Naive thymus-derived CD8-positive, alpha-beta T cell (primary cell): ENCODE measurements at regions of chr15 and their contacts with region 1.

Region 1: DNA sequence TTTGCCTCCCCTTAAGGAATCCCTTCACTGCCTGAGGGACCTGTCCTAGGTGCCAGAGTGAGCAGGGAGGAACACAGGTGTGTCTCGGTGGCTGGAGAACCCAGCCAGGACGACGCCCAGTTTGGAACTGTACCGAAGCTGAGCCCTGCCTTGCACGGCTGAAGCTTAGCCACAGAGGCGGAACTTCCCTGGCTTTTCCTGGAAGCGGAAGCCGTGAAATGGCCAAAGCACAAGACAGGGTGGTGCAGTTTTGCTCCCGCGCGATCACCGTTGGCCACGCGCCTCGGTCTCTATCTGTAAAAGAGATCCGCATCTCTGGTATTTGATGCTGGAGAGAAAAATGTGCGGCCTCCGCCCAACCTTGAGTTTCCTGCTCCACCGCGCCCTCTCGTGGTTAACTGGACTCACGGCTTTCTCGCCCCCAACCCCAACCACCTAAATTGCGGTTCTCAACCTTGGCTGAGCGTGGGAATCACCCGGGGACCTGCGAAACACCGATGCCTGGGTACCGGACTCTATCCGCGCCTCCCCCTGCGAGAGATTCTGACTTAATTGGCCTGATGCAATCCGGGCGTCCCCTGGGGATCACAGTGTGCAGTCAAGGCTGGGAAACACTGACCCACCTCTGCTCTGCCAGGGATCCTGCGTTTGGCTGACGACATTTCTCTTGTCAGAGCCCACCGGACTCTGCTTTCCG is 70.7 kb upstream of the ABHD2 start:
- DNase-seq: peak; percentile 69 to 91 (median 79)
- ATAC-seq: peak; percentile 96 to 97
- H3K4me3 Mint-ChIP-seq: peak overlapping the region; percentile 50 to 77 (median 68)
- H3K27ac Mint-ChIP-seq: peak overlapping the region in 9 of 10 donors; percentile 64 to 90 (median 75)
- H3K4me1 Mint-ChIP-seq: peaks cover 4 to 15% (median 11%) of the 10 kb centered on the region in 4 donors
- H3K27me3 Mint-ChIP-seq: peaks cover 0 to 20% (median 3%) of the 10 kb centered on the region in 5 donors

Region 2: DNA sequence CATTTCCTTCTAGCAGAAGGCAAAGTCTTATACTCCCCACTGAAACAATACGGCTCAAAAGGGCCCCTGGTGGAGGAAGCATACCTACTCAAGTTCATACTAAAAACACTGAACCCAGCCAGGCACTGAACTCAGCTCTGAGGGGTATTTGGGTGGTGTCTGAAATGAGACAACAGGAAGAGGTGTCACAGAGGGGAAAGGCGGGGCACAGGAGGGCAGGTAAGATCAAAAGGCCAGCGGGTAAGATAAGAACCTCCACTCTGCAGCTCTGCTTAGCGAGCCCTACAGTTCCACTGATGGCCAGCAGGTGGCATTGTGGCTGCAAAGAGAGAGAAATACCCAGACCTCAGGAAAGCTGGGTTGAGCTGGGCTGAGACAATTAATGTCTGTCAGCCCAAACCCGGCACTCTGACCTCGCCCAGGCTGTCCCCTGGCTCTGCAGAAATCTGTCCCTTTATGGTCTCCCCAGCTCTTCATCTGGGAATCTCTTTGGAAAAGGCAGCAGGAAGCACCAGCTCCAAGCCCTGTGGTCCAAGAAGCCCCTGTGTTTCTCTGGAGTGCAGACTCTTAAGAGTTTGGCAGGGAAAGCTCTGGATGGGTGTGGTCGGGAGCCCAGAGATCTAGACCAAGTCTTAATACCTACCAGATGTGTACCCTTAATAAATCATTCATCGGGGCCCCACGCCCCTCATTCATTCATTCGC is 112.7 kb before region 1 on chr15:
- POLR2A ChIA-PET with region 1: interaction called, 16 read pairs
- DNase-seq: peak; percentile 83 to 98 (median 96)
- ATAC-seq: peak; percentile 97 to 99
- H3K4me3 Mint-ChIP-seq: peak overlapping the region; percentile 5 to 87 (median 60)
- H3K27ac Mint-ChIP-seq: peak overlapping the region; percentile 84 to 98 (median 96)
- H3K4me1 Mint-ChIP-seq: peaks cover 31 to 61% (median 51%) of the 10 kb centered on the region in 4 donors
- H3K27me3 Mint-ChIP-seq: no peaks in the 10 kb centered on the region

Region 3: DNA sequence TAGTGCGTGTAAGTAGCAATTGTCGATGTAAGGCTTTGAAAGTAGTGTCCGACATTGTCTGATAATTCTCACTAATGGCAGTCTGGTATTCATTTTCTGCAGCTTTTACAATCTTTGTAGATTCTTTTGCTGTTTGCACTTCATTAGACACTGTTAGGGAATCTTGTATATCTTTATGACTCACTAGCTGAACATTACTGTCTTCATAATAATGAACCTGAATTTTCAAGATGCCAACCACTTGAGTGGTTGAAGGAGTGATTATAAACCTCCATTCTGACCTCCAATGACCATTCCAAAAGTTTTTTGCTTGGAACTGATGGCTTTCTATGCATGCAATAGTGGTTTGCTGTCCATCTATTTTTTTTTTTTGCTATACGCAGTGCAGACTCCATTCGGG is 27.9 kb before region 1 on chr15:
- POLR2A ChIA-PET with region 1: no interaction called
- DNase-seq: no peak
- ATAC-seq: no peak
- H3K4me3 Mint-ChIP-seq: no peak overlapping the region
- H3K27ac Mint-ChIP-seq: no peak overlapping the region
- H3K4me1 Mint-ChIP-seq: no peaks in the 10 kb centered on the region
- H3K27me3 Mint-ChIP-seq: peaks cover 0 to 1% (median 0%) of the 10 kb centered on the region in 5 donors